ENCODE measurements at regions of chr2 and their contacts with region 1.

Region 1: DNA sequence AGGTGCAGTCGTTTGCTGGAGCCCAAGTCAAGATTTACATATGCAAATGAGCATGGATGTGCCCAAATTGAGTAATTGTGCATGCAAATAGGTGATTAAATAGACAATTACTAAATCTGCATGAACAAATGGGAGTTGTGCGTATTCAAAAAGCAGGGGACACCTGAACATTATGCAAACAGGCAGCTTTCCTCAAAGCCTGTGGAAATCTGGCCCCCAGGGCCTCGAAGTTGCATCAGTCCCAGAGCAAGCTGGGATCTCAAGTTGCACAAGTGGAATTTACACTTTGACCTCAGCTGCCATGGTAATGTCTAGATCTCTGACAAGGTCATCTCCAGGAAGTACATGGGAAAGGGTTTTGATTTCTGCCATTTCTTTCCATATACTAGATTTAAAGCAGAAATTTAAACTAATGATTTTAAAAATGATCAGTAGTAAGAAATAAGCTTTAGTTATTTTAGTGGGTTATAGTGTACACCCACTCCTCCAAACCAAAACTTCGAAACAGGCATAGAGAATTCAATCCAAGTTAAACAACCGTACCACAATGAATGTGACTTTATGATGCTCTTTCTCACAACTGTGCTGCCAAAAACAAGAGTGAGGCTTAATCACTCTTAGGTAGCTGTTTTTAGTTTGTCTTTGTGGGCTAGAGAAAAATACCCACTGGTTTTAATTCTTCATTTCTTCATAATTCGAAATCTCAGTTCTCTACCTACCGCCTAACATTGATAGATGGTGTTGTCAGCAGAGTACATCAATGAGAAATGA is 110.7 kb downstream of the RND3 start:
- DNase-seq: no peak
- ATAC-seq: peak; percentile 42

Region 2: DNA sequence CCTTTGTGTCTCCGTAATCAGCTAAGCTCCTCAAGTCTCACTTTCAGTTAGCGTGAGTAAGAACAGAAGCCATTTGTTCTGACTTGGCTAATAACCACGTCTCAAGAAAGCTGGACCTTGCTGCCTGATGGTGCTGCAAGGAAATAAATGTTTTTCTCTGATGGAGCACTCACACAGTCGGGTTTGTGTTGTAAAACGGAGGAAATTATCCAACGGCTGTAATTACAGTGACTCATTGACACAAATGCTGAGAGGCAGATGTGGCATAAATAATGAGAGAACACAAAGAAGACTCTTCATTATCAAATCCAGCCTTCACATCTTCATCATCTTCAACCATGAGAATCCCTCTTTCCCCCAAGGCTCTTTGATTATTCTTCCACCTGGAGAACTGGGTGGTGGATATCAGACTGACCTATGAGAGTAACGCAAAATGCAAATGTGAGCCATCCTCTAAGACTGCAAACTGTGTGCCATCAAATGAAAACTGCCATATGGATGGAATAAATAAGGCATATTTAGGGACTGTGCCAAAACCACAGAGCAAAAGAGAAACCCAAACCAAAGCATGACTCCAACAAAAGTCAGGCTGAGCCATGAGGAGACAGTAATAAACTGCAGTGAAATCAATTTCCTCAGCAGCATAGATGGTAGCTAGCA is 141.8 kb before region 1 on chr2:
- intact Hi-C with region 1: no loop called
- DNase-seq: no peak
- ATAC-seq: peak; percentile 78

Region 3: GRCh38 chr2:150303281-150303680 is 73.5 kb before region 1 on chr2:
- intact Hi-C with region 1: loop called (anchors 10 kb)
- DNase-seq: no peak
- ATAC-seq: no peak